Transverse colon (tissue), 4 donors: ENCODE measurements at regions of chr17 and their contacts with region 1.

Region 1: DNA sequence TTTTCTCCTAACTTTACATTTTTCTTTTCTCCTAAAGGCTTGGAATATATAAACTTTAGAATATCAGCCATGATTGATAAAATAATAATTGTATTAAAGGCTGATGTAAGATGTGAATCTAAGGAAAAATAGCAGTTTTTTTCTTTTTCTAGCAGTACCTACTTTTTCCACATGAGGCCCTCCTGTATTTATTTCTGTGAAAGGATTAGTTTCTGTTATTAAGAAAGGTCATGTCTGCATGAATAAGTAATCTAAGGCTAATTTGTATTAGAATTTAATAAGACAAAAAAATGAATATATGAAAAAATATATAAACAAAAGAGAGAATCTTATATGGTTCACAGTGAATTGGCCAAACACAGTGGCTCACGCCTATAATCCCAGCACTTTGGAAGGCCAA is 85.3 kb downstream of the STXBP4 start:
- DNase-seq: no peak
- H3K4me3 ChIP-seq: no peak overlapping the region
- H3K27ac ChIP-seq: no peak overlapping the region
- H3K4me1 ChIP-seq: peaks cover 0 to 5% (median 0%) of the 10 kb centered on the region in 4 donors
- H3K27me3 ChIP-seq: no peaks in the 10 kb centered on the region
- CTCF ChIP-seq: peak in 1 of 5 experiments; percentile 32
- EP300 ChIP-seq: no peak
- POLR2A ChIP-seq: no peak

Region 2: DNA sequence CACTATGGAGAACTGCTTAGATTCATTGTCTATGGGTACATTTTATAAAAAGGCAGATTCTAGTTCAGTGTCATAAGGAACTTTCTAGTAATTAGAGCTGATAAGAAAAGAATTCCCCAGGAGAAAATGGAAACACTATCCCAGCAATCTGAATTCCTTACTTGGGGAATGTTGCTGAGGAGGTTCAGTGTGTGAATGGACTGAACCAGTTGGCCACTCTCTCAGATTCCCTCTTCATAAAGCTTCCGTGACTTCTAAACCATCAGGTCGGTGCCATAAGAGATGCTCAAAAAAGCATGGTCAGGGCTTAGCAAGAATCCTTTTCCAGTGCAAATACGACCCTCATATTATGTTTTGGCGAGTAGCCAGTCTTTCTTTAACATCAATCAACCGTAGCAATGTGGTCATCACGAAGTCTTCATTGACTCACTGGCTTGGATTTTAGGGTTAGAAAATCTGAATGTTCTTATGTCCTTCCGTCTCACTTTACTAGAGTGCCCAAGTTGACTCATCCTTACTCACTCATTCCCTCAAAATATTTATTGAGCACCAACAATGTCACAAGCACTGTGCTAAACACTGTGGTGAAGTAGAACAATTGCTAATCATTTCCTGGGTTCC is 108.2 kb after region 1 on chr17:
- in situ Hi-C with region 1: loop called in 1 of 4 experiments (anchors 25 kb)
- intact Hi-C with region 1: no loop called
- DNase-seq: no peak
- H3K4me3 ChIP-seq: no peak overlapping the region
- H3K27ac ChIP-seq: no peak overlapping the region
- H3K4me1 ChIP-seq: peaks cover 0 to 7% (median 5%) of the 10 kb centered on the region in 4 donors
- H3K27me3 ChIP-seq: no peaks in the 10 kb centered on the region
- CTCF ChIP-seq: no peak
- EP300 ChIP-seq: no peak
- POLR2A ChIP-seq: no peak